AG04450 (cell line): ENCODE measurements at regions of chr15 and their contacts with region 1.

Region 1: GRCh38 chr15:92917606-92918407 is 17.7 kb downstream of the CHD2 start:
- DNase-seq: peak; percentile 83
- H3K4me3 ChIP-seq: no peak overlapping the region
- H3K27ac ChIP-seq: peak overlapping the region; percentile 68
- H3K27me3 ChIP-seq: no peaks in the 10 kb centered on the region
- CTCF ChIP-seq: peak; percentile 83

Region 2: DNA sequence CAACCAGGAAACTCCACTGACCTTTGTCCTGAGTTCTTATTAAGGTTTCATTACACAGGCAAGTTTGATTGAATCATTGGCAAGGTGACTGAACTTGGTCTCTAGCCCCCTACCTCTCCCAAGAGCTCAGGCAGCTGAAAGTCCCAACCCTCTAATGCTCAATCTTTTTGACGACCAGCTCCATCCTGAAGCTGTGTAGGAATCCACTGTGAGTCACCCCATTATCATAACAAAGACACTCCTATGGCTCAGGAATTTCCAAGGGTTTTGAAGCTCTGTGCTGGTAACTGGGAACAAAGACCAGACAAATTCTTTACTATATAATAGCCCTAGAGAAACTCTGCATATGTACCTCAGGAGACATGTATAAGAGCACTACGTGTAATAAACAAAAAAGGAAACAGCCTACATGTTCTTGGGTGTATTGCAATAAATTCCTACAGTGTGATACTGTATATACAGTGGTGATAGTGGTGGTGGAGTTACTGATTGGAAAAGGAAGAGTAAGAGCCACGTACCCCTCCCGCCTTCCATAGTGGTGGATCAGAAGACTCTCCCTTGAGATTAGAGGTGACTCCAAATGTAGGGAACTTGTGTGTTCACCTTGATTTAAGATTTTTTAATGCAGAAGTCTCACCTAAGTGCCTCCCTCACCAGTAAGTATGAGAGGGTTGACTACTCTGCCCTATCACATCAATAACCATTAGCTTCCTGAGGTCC is 407.5 kb before region 1 on chr15:
- CTCF ChIA-PET with region 1: no interaction called
- POLR2A ChIA-PET with region 1: no interaction called
- DNase-seq: no peak
- H3K4me3 ChIP-seq: no peak overlapping the region
- H3K27ac ChIP-seq: no peak overlapping the region
- H3K27me3 ChIP-seq: no peaks in the 10 kb centered on the region
- CTCF ChIP-seq: no peak

Region 3: DNA sequence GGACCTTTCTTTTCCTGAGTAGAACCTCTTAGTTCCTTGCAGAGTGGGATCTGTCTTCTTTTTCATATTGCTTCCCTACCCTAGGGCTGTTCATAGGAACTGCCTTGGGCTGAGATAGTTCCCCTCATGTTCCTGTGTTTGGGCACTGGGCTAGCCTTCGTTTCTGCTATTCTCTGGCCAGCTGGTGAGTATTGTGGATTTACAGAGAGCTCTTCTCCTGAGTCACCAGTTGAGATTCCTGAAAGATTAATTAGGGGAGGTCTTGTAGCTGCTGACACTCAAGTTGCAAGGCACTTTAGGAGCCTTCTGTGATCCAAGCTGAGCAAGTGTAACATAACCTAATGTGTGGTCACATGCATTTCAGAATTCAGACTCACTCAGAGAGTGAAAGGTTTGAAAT is 13.0 kb after region 1 on chr15:
- CTCF ChIA-PET with region 1: interaction called, 24 read pairs
- POLR2A ChIA-PET with region 1: no interaction called
- DNase-seq: peak; percentile 71
- H3K4me3 ChIP-seq: no peak overlapping the region
- H3K27ac ChIP-seq: peak overlapping the region; percentile 79
- H3K27me3 ChIP-seq: no peaks in the 10 kb centered on the region
- CTCF ChIP-seq: no peak

Region 4: GRCh38 chr15:92938387-92938786 is 20.6 kb after region 1 on chr15:
- CTCF ChIA-PET with region 1: interaction called, 12 read pairs
- POLR2A ChIA-PET with region 1: no interaction called
- DNase-seq: no peak
- H3K4me3 ChIP-seq: no peak overlapping the region
- H3K27ac ChIP-seq: no peak overlapping the region
- H3K27me3 ChIP-seq: no peaks in the 10 kb centered on the region
- CTCF ChIP-seq: peak; percentile 36